ENCODE measurements at regions of chr5 and their contacts with region 1.

Region 1: GRCh38 chr5:173057062-173057924 is 1.1 kb downstream of the CREBRF start:
- DNase-seq: peak; percentile 97
- ATAC-seq: peak; percentile 91
- H3K4me3 ChIP-seq: peak overlapping the region; percentile 83 to 98 (median 93)
- H3K27ac ChIP-seq: peak overlapping the region; percentile 89
- H3K4me1 ChIP-seq: peaks cover 36% of the 10 kb centered on the region
- H3K27me3 ChIP-seq: no peaks in the 10 kb centered on the region; a peak in 1 of 5 replicates
- CTCF ChIP-seq: no peak
- EP300 ChIP-seq: no peak
- POLR2A ChIP-seq: peak; percentile 79 to 81
- RAD21 ChIP-seq: no peak

Region 2: GRCh38 chr5:172150514-172151425 is 906.5 kb before region 1 on chr5:
- CTCF ChIA-PET with region 1: no interaction called
- POLR2A ChIA-PET with region 1: no interaction called
- in situ Hi-C with region 1: no loop called
- intact Hi-C with region 1: no loop called
- DNase-seq: no peak
- ATAC-seq: peak; percentile 51
- H3K4me3 ChIP-seq: no peak overlapping the region
- H3K27ac ChIP-seq: peak overlapping the region; percentile 37
- H3K4me1 ChIP-seq: peaks cover 31% of the 10 kb centered on the region
- H3K27me3 ChIP-seq: no peaks in the 10 kb centered on the region
- CTCF ChIP-seq: no peak
- EP300 ChIP-seq: no peak
- POLR2A ChIP-seq: no peak
- RAD21 ChIP-seq: no peak

Region 3: GRCh38 chr5:173016621-173017047 is 40.7 kb before region 1 on chr5:
- CTCF ChIA-PET with region 1: no interaction called
- POLR2A ChIA-PET with region 1: interaction called, 8 read pairs
- in situ Hi-C with region 1: loop called (anchors 5 kb)
- intact Hi-C with region 1: loop called (anchors 2 kb)
- DNase-seq: peak; percentile 84
- ATAC-seq: peak; percentile 82
- H3K4me3 ChIP-seq: peak overlapping the region in 2 of 3 experiments; percentile 14 to 38; a peak in 2 of 6 replicates
- H3K27ac ChIP-seq: peak overlapping the region; percentile 71
- H3K4me1 ChIP-seq: peaks cover 57% of the 10 kb centered on the region
- H3K27me3 ChIP-seq: no peaks in the 10 kb centered on the region
- CTCF ChIP-seq: no peak
- EP300 ChIP-seq: peak in 1 of 2 experiments; percentile 43; a peak in 1 of 4 replicates
- POLR2A ChIP-seq: no peak
- RAD21 ChIP-seq: no peak

Region 4: DNA sequence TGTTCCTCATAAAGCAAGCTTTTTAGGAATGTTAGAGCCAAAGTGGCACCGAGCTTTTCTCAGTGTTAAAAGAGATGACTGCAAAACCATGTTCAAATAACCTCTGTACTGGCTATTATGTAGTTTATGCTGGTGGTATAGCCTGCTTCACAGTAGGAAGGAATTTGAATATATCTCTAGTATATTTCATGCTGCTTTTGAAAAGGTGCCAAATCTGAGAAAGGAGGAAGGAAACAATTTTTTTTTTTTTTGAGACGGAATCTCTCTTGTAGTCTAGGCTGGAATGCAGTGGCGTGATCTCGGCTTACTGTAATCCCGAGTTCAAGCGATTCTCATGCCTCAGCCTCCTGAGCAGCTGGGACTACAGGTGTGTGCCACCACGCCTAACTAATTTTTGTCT is 12.4 kb after region 1 on chr5:
- CTCF ChIA-PET with region 1: no interaction called
- POLR2A ChIA-PET with region 1: interaction called, 12 read pairs
- in situ Hi-C with region 1: no loop called
- intact Hi-C with region 1: no loop called
- DNase-seq: no peak
- ATAC-seq: no peak
- H3K4me3 ChIP-seq: no peak overlapping the region
- H3K27ac ChIP-seq: no peak overlapping the region
- H3K4me1 ChIP-seq: peaks cover 17% of the 10 kb centered on the region
- H3K27me3 ChIP-seq: no peaks in the 10 kb centered on the region
- CTCF ChIP-seq: no peak
- EP300 ChIP-seq: no peak
- POLR2A ChIP-seq: no peak
- RAD21 ChIP-seq: no peak

Region 5: GRCh38 chr5:173094012-173094661 is 36.8 kb after region 1 on chr5:
- CTCF ChIA-PET with region 1: no interaction called
- POLR2A ChIA-PET with region 1: no interaction called
- in situ Hi-C with region 1: no loop called
- intact Hi-C with region 1: loop called (anchors 5 kb)
- DNase-seq: peak; percentile 73
- ATAC-seq: no peak
- H3K4me3 ChIP-seq: no peak overlapping the region
- H3K27ac ChIP-seq: no peak overlapping the region
- H3K4me1 ChIP-seq: peaks cover 14% of the 10 kb centered on the region
- H3K27me3 ChIP-seq: no peaks in the 10 kb centered on the region
- CTCF ChIP-seq: no peak
- EP300 ChIP-seq: 0 out of 4 replicates have a peak, but pooled peaks of 1 of the 2 experiments have one; percentile 6
- POLR2A ChIP-seq: no peak
- RAD21 ChIP-seq: no peak

Region 6: GRCh38 chr5:173123416-173123815 is 66.1 kb after region 1 on chr5:
- CTCF ChIA-PET with region 1: no interaction called
- POLR2A ChIA-PET with region 1: no interaction called
- in situ Hi-C with region 1: no loop called
- intact Hi-C with region 1: no loop called
- DNase-seq: peak; percentile 54
- ATAC-seq: peak; percentile 87
- H3K4me3 ChIP-seq: no peak overlapping the region
- H3K27ac ChIP-seq: no peak overlapping the region
- H3K4me1 ChIP-seq: peaks cover 9% of the 10 kb centered on the region
- H3K27me3 ChIP-seq: no peaks in the 10 kb centered on the region
- CTCF ChIP-seq: no peak
- EP300 ChIP-seq: no peak
- POLR2A ChIP-seq: no peak
- RAD21 ChIP-seq: no peak

Region 7: DNA sequence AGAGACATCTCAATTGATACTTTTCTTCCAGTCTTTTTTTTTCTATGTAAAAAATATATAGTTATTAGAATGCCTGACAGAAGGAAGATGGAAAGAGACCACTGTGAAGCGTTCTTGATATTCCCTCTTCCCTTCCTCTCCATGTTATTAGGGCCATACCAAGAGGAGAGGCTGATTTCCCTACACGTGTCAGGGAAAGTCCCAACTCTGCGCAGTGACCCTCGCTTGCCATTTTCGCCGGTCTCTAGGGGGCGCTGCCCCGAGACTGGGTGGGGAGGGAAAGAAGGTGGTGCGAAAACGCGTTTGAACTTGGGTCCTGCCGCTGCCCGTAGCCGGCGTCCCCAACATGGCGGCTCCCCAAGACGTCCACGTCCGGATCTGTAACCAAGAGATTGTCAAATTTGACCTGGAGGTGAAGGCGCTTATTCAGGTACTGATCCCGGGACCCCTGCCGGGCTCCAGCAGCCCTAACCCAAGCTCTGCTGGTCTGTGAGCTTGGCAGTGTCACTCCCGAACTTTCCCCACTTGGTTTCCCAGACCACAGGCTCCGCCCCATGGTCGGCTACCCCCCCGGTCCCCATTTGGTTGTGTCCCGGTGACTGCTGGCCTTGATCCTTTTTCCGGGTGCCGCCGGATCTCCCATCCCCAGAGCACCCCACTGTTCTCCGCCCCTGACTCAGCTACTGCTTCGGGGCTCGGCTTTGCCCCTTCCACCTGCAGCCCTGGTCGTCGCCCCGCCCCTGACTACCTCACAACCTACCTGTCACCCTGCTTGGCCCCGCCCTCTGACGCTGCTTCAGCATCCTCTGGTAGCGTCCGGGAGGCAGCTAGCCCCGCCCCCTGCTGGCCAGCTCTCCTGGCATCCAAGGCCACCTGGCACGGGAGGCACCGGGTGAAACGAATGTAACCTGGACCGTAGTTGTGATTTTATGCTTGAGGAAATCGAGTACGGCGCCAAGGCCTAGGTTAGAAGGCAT is 87.2 kb after region 1 on chr5 and contains the start of gene BNIP1:
- CTCF ChIA-PET with region 1: no interaction called
- POLR2A ChIA-PET with region 1: interaction called, 3 read pairs
- in situ Hi-C with region 1: no loop called
- intact Hi-C with region 1: loop called (anchors 2 kb)
- DNase-seq: peak; percentile 90
- ATAC-seq: peak; percentile 93
- H3K4me3 ChIP-seq: peak within 1 kb of the TSS; percentile 77 to 90 (median 85)
- H3K27ac ChIP-seq: peak within 1 kb of the TSS; percentile 70
- H3K4me1 ChIP-seq: peaks cover 19% of the 10 kb centered on the region
- H3K27me3 ChIP-seq: no peaks in the 10 kb centered on the region; a peak in 1 of 5 replicates
- CTCF ChIP-seq: peak; percentile 97
- EP300 ChIP-seq: peak; percentile 32 to 70; a peak in 2 of 4 replicates
- POLR2A ChIP-seq: peak; percentile 67 to 84
- RAD21 ChIP-seq: peak; percentile 54
- total RNA-seq, gene BNIP1: 16.9 and 20.6 TPM in 2 replicates